ENCODE measurements at regions of chr6 and their contacts with region 1.

Region 1: DNA sequence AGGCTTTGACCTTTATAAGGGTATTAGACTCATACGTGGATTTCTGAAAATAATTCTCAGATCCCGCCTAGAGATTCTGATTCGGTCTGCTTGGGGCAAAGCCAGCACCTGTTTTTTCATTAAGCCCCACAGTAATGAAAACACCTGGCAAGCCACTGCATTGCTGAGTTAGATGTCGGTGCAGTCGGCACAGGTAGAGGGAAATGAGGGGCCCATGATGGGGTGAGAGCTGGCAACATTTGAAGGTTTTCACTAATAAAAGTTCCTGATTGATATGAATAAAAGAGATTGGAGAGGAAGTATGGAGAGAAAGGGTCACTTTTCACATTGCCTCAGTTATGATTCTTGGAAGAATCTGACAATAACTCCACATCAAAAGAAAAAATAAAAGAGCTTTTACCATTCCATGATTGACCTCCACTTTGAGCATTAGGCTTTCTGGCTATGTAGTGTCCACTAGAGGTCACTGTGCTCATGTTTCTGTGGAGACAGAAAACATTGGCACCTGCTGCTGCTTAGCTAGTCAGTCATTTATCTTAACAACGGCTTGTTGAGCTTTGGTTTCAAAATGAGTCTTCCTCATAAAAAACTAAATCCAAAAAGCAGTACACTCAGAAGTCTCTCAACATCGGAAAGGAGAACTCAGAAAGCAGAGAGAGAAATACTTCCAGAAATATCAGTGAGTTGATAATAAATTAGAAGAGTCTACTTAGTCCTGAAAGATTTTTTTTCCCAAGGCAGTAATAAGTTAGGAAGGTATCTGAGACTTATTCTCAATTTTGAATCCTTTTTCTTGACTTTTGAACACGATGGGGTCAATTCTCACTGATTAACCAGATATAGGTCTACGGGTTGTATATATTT is 53.3 kb upstream of the KLHL31 start:
- DNase-seq: no peak
- ATAC-seq: peak; percentile 84
- H3K4me3 Mint-ChIP-seq: no peak overlapping the region
- H3K27ac Mint-ChIP-seq: no peak overlapping the region
- H3K4me1 Mint-ChIP-seq: peaks cover 7% of the 10 kb centered on the region
- H3K27me3 Mint-ChIP-seq: no peaks in the 10 kb centered on the region
- CTCF ChIP-seq: peak; percentile 63

Region 2: GRCh38 chr6:53651764-53652401 is 66.9 kb before region 1 on chr6:
- CTCF ChIA-PET with region 1: interaction called, 12 read pairs
- POLR2A ChIA-PET with region 1: no interaction called
- DNase-seq: peak; percentile 71
- ATAC-seq: peak; percentile 93
- H3K4me3 Mint-ChIP-seq: peak overlapping the region; percentile 79
- H3K27ac Mint-ChIP-seq: no peak overlapping the region
- H3K4me1 Mint-ChIP-seq: peaks cover 6% of the 10 kb centered on the region
- H3K27me3 Mint-ChIP-seq: peaks cover 20% of the 10 kb centered on the region
- CTCF ChIP-seq: no peak; the same call in 1 of the 2 replicates

Region 3: DNA sequence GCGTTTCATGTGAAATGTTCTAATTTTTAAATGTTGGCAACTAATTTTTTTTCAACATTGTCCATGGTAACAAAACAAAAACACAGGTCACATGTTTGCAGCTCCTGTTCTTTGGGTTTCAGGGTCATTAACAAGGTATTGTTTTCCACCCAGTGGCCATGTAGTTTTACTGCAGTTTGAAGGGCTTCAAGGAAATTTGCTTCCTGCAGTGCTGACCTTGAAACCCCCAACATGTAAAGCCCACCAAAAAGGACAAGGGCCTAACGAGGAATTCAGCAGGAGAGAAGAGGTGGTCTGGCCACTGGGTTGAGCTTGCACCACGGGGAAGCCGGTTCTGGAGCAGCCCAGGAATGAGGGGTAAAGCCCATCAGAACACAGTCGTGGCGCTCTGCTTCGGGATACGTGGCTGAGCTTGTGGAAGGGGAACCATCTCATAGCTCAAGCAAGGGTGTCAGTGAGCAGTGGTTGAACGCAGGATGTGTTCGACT is 39.3 kb before region 1 on chr6:
- CTCF ChIA-PET with region 1: interaction called, 16 read pairs
- POLR2A ChIA-PET with region 1: no interaction called
- DNase-seq: peak; percentile 15
- ATAC-seq: peak; percentile 86
- H3K4me3 Mint-ChIP-seq: no peak overlapping the region
- H3K27ac Mint-ChIP-seq: no peak overlapping the region
- H3K4me1 Mint-ChIP-seq: peaks cover 11% of the 10 kb centered on the region
- H3K27me3 Mint-ChIP-seq: no peaks in the 10 kb centered on the region
- CTCF ChIP-seq: no peak; the same call in 1 of the 2 replicates

Region 4: GRCh38 chr6:53702316-53702715 is 16.5 kb before region 1 on chr6:
- CTCF ChIA-PET with region 1: interaction called, 29 read pairs
- POLR2A ChIA-PET with region 1: no interaction called
- DNase-seq: no peak
- ATAC-seq: no peak
- H3K4me3 Mint-ChIP-seq: no peak overlapping the region
- H3K27ac Mint-ChIP-seq: no peak overlapping the region
- H3K4me1 Mint-ChIP-seq: peaks cover 3% of the 10 kb centered on the region
- H3K27me3 Mint-ChIP-seq: no peaks in the 10 kb centered on the region; the same call in 1 of the 2 replicates
- CTCF ChIP-seq: no peak

Region 5: GRCh38 chr6:53752856-53753255 is 34.0 kb after region 1 on chr6:
- CTCF ChIA-PET with region 1: no interaction called
- POLR2A ChIA-PET with region 1: no interaction called
- DNase-seq: no peak
- ATAC-seq: no peak
- H3K4me3 Mint-ChIP-seq: no peak overlapping the region
- H3K27ac Mint-ChIP-seq: no peak overlapping the region
- H3K4me1 Mint-ChIP-seq: peaks cover 3% of the 10 kb centered on the region; the same call in 1 of the 2 replicates
- H3K27me3 Mint-ChIP-seq: no peaks in the 10 kb centered on the region
- CTCF ChIP-seq: no peak

Region 6: GRCh38 chr6:53794720-53795253 is 76.0 kb after region 1 on chr6 and contains the start of gene LRRC1:
- CTCF ChIA-PET with region 1: interaction called, 16 read pairs
- POLR2A ChIA-PET with region 1: no interaction called
- DNase-seq: peak; percentile 96
- ATAC-seq: peak; percentile 66
- H3K4me3 Mint-ChIP-seq: peak within 1 kb of the TSS; percentile 95
- H3K27ac Mint-ChIP-seq: peak within 1 kb of the TSS; percentile 98
- H3K4me1 Mint-ChIP-seq: peaks cover 30% of the 10 kb centered on the region
- H3K27me3 Mint-ChIP-seq: peaks cover 20% of the 10 kb centered on the region
- CTCF ChIP-seq: no peak
- total RNA-seq, gene LRRC1: 12.6 to 13.2 TPM (median 12.7 TPM) in 3 replicates

Region 7: DNA sequence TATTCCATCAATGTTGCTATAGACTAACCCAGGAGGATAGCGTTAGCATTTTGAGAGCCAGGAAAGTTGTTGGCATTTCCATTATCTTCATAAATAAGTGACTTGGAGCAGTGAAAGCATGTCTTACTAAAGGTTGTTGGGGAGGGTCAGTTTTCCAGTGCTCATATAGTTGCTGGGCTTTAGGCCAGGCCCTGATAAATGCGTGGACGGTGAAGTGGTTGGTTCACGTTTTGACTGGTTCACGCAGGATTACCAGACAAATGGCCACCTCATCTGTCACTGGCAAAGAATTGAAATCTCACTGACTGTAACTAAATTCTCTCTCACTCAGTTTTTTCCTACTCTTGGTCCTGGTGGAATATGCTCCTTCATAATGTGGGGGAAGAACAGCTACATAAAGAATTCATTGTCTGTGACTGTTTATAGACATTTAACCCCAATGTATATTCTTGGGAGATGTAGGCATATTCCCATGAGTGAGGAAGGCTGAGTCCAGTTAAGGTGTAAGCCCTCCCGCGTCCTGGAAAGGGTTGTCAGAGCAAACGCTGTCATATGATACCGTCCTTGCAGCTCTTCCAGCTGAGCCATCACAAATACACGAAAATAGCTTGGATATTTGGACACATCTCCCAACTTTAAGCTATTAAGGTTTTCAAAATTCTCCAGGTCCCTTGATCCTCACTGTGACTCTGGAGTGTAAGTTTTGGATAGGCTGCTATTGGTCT is 103.7 kb after region 1 on chr6:
- CTCF ChIA-PET with region 1: no interaction called
- POLR2A ChIA-PET with region 1: no interaction called
- DNase-seq: no peak
- ATAC-seq: no peak
- H3K4me3 Mint-ChIP-seq: no peak overlapping the region
- H3K27ac Mint-ChIP-seq: no peak overlapping the region
- H3K4me1 Mint-ChIP-seq: peaks cover 47% of the 10 kb centered on the region
- H3K27me3 Mint-ChIP-seq: no peaks in the 10 kb centered on the region
- CTCF ChIP-seq: no peak

Measured in WTC11 (cell line).